A549 (cell line): ENCODE measurements at regions of chr15 and their contacts with region 1.

Region 1: DNA sequence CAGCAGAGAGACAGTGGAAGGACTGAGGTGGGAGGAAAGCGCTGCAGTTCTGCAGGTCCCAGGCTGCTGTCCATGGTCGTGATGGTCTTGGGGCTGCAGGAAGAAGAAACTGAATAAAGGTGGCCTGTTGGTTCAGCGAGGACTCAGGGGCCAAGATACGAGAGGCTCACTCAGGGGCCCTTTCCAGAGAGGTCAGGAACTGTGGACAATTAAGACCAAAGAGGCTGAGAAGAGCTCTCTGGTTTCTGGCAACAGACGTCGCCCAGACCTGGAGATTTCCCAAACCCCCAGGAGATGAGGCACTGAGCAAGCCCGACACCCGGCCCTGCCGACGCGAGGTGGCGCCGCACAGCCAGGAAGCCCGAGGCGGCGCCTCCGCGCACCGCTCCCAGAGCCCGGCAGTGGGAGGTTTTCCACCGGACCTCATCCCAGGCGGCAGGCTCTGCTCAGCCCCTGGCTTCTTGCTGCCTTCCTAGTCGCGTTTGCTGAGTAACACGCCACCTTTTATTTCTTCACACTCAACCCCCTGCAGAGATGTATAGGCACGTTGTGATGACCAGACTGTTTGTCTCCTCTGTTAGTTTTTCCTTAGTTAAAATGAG is 56.4 kb upstream of the ARRDC4 start:
- DNase-seq: peak; percentile 61 to 71
- ATAC-seq: peak; percentile 92 to 99
- H3K4me3 ChIP-seq: no peak overlapping the region
- H3K27ac ChIP-seq: no peak overlapping the region
- H3K4me1 ChIP-seq: no peaks in the 10 kb centered on the region
- CTCF ChIP-seq: peak; percentile 67
- EP300 ChIP-seq: no peak
- POLR2A ChIP-seq: no peak
- RAD21 ChIP-seq: peak; percentile 59 to 66

Region 2: DNA sequence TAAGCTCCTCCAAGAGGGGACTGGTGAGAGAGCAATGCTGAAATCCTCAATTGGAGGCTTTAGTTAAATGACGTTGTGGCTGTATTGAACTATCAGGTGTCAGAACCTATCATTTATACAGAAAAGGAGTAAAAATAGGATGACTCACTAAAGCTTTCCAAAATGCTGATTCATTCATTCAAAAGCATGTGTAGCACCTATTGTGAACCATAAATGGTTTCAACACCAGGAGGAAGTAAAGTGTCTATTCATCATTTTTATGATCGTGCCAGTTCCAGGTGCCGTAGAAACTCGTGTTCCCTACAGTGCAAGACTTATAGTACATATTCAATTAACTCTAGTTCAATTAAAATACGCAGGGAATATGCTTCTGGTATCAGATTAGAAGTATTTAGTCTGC is 10.1 kb before region 1 on chr15:
- CTCF ChIA-PET with region 1: interaction called, 22 read pairs
- POLR2A ChIA-PET with region 1: no interaction called
- DNase-seq: no peak
- ATAC-seq: no peak
- H3K4me3 ChIP-seq: no peak overlapping the region
- H3K27ac ChIP-seq: no peak overlapping the region
- H3K4me1 ChIP-seq: no peaks in the 10 kb centered on the region
- CTCF ChIP-seq: no peak
- EP300 ChIP-seq: no peak
- POLR2A ChIP-seq: no peak
- RAD21 ChIP-seq: no peak

Region 3: DNA sequence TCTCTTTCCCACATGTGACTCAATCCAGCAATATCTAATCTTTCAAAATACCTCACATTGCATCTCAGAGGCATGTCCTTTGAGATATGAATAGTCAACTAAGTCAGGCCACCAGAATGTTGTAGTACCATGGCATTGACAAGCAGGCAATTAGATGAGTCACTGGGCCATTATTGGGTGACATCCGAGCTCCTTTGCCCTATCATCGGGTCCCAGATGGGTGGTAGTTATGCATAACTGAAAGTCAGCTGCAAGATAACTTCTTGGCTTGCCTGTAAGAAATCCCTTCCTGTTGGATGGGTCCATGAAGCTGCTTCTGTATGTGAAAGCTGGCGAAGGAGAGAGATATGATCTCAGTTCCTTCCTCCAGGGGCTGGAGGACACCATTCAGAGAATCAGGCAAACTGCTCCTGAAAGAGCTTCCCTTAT is 89.3 kb after region 1 on chr15:
- CTCF ChIA-PET with region 1: no interaction called
- POLR2A ChIA-PET with region 1: no interaction called
- DNase-seq: no peak
- ATAC-seq: no peak
- H3K4me3 ChIP-seq: no peak overlapping the region
- H3K27ac ChIP-seq: no peak overlapping the region
- H3K4me1 ChIP-seq: no peaks in the 10 kb centered on the region
- CTCF ChIP-seq: no peak
- EP300 ChIP-seq: no peak
- POLR2A ChIP-seq: no peak
- RAD21 ChIP-seq: no peak

Region 4: DNA sequence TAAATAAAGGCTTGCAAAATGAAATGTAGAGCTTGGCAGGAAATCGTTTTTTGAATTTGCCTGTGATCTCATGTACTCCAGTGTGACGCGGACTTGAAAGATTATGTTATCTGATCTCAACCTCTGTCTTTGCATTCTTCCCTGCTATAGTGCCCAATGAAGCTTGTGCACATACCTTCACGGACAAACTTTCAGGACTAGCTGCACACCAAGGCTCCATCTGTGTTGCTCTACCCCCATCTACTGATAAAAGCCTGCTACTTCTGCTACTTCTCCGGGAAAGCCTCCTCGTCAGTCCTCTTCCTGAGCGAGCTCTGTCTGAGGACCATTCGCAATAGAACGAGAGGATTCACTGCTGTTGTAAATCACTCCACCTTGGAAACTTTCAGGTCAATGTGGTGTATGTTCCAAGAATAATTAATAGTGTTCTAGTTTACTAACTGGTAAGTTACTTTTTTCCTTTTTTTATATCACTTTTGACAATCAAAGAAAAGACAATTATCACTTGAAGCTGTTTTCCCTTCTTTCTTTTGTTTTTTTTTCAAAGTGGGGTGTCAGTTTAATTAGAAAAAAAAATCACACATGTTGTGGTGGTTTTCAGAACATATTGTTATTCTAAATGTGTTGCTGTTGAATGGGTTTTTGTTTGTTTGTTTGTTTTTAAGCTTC is 274.0 kb after region 1 on chr15:
- CTCF ChIA-PET with region 1: interaction called, 27 read pairs
- POLR2A ChIA-PET with region 1: no interaction called
- DNase-seq: peak; percentile 48 to 70
- ATAC-seq: peak; percentile 96 to 97
- H3K4me3 ChIP-seq: no peak overlapping the region
- H3K27ac ChIP-seq: no peak overlapping the region
- H3K4me1 ChIP-seq: no peaks in the 10 kb centered on the region
- CTCF ChIP-seq: peak; percentile 61
- EP300 ChIP-seq: no peak
- POLR2A ChIP-seq: no peak
- RAD21 ChIP-seq: peak; percentile 71 to 88

Region 5: DNA sequence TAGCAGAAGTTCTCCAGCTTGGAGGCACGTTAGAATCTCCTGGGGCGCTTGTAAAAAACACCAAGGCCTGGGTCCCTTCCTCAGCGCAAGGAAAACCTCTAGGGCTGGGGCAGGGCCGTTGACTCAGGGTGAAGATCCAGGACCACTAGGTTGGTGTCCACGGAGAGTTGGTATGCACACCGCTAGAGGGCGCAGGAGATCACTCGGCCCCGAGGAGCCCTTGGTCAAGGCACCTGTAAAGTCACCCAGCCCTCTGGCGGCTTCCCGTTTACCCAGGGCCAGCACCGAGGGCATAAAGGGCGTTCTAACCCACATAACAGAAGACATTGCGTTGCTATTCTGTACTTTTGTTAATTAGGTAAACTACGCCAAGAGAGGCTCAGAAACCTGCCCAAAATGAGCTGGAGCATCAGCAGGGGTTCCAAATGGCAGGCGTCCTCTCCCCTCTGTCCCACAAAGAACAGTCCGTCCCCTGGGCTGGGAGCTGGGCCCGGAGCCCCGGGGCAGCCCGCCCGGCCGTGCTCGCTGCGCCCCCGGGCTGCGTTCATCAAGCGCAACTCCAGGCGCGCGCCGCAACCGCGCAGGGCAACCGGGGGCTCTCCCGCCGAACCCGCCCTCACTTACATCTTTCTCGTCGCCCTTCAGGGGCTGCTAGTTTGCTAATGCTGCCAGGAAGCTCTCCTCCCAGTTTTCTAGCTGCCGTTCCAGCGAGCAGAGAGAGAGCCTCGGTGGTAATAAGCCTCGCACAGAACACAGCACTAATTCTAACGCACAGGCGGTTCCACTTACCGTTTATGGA is 388.6 kb after region 1 on chr15:
- CTCF ChIA-PET with region 1: interaction called, 14 read pairs
- POLR2A ChIA-PET with region 1: no interaction called
- DNase-seq: peak; percentile 56 to 74
- ATAC-seq: peak; percentile 84 to 97
- H3K4me3 ChIP-seq: no peak overlapping the region
- H3K27ac ChIP-seq: no peak overlapping the region
- H3K4me1 ChIP-seq: no peaks in the 10 kb centered on the region
- CTCF ChIP-seq: peak; percentile 66
- EP300 ChIP-seq: no peak
- POLR2A ChIP-seq: no peak
- RAD21 ChIP-seq: peak; percentile 34 to 36; a peak in 3 of 5 replicates

Region 6: GRCh38 chr15:98421419-98422129 is 517.5 kb after region 1 on chr15:
- CTCF ChIA-PET with region 1: interaction called, 10 read pairs
- POLR2A ChIA-PET with region 1: no interaction called
- DNase-seq: peak; percentile 54 to 87
- ATAC-seq: peak; percentile 67 to 90
- H3K4me3 ChIP-seq: peak overlapping the region; percentile 34
- H3K27ac ChIP-seq: no peak overlapping the region
- H3K4me1 ChIP-seq: peaks cover 12% of the 10 kb centered on the region; the same call in 2 of the 3 replicates
- CTCF ChIP-seq: peak; percentile 99
- EP300 ChIP-seq: no peak
- POLR2A ChIP-seq: no peak
- RAD21 ChIP-seq: peak; percentile 95 to 99